A673 (cell line): ENCODE measurements at regions of chr9 and their contacts with region 1.

Region 1: DNA sequence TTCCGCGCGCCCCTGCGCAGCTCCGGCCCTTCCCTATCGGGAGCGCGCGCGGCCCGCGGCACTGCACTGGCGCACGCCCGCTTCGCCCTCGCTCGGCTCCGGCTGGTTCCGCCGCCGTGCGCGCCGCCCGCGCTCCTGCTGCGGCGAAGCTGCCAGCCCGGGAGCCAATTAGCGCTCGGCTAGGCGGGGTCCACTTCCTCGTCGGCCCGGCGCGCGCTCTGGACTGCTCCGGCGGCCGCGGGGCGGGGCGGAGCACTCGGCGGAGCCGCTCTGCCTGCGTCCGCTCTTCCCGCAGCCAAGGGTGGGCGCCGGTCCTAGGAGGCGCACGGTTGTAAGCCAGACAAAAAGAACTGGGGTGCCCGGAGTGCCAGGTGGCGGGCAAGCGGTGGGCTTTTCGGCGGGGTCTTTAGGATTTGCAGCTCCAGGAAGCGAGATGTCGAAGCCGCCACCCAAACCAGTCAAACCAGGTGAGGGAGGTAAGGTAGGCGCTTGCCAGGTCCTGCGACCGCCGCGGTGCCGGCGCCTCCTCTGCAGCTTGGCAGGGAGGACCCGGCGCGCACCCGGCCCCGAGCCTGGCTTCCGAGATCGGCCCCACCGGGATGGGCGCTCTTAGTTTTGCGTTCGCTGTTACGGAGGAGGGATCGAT is at the start of gene OSTF1:
- DNase-seq: peak; percentile 96
- H3K4me3 ChIP-seq: peak within 1 kb of the TSS; percentile 81
- H3K27ac ChIP-seq: peak within 1 kb of the TSS; percentile 61
- H3K4me1 ChIP-seq: peaks cover 7% of the 10 kb centered on the region
- H3K27me3 ChIP-seq: peaks cover 24% of the 10 kb centered on the region
- CTCF ChIP-seq: no peak
- total RNA-seq, gene OSTF1: 1.2 and 2.3 TPM in 2 replicates

Region 2: DNA sequence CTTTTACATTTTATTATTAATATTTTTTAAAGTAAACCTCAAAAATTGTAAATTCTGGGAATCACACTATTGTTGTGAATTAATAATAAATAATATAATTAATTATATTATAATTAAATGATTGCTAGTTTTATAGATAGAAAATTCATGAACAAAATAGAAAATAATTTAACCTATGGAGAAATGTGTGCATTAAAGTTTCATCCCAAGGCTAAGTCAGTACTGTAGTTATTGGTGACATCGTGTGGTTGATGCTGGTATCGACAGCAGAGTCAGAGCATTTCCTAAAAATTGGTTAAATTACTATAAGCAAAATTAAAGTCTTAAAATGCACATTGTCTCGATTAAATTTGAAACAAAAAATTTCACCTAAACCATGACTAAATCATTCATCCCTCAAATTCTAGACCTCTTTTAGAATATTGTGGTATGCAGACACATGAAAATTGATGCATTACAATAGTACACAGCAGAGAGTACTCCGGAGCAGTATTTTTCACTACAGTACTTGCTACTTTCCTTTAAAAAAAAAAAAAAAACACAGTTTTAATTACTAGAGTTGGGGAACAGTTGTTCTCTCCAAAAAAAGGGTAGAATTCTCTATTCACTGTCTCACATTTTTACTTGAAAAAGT is 517.4 kb before region 1 on chr9:
- CTCF ChIA-PET with region 1: no interaction called
- POLR2A ChIA-PET with region 1: no interaction called
- intact Hi-C with region 1: loop called (anchors 10 kb)
- DNase-seq: peak; percentile 39
- H3K4me3 ChIP-seq: no peak overlapping the region
- H3K27ac ChIP-seq: no peak overlapping the region
- H3K4me1 ChIP-seq: no peaks in the 10 kb centered on the region
- H3K27me3 ChIP-seq: peaks cover 10% of the 10 kb centered on the region
- CTCF ChIP-seq: peak; percentile 73

Region 3: DNA sequence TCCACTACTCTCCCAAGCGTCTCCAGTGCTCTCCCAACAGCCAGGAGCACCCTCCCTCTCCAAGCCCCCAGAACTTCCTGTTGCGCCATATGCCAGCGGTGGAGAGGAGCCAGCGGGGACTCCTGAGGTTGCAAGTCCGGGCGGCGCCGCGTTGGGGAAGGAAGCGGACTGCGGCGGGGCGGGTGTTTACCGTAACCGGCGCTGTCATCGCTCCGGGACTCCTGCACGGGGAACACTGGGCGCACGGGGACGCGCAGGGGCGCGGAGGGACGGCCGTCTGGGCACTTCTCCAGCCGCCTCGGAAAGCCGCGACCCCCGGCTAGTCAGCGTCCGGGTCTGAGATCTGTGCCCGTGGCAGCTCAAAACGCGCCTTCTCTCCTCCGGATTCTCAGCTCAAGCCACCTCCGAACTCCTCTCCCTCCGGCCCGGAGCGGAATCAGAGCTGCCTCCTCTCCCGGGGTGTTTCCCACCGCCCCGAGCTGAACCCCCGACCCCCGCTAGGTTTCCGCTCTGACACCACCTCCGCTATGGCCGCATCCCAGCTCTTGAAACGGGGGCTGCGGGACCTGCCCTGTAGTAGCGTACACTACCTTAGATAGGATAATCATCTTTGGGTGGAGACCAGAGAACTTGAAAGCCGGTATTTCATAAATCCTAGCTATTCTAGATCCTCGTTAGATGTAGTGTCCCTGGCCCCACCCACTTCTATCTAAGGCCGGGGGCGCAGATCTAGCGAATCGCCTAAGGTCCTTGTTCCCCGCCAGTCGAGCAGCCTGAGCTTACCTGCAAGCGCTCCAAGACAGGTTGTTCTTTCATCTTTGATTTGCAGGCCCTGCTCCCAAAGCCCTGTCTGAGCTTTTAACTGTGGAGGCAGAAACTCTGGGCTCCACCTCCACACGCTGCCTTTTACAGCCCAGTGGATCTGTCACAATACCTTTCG is 201.1 kb before region 1 on chr9 and contains the start of gene TRPM6:
- CTCF ChIA-PET with region 1: no interaction called
- POLR2A ChIA-PET with region 1: no interaction called
- intact Hi-C with region 1: loop called (anchors 10 kb)
- DNase-seq: peak; percentile 77
- H3K4me3 ChIP-seq: peak within 1 kb of the TSS; percentile 47
- H3K27ac ChIP-seq: no peak within 1 kb of the TSS
- H3K4me1 ChIP-seq: peaks cover 5% of the 10 kb centered on the region
- H3K27me3 ChIP-seq: peaks cover 7% of the 10 kb centered on the region
- CTCF ChIP-seq: no peak
- total RNA-seq, gene TRPM6: 0.06 TPM in 1 of 2 replicates, not detected in the other

Region 4: GRCh38 chr9:74940600-74940999 is 147.8 kb before region 1 on chr9:
- CTCF ChIA-PET with region 1: no interaction called
- POLR2A ChIA-PET with region 1: no interaction called
- intact Hi-C with region 1: loop called (anchors 10 kb)
- DNase-seq: peak; percentile 49
- H3K4me3 ChIP-seq: no peak overlapping the region
- H3K27ac ChIP-seq: no peak overlapping the region
- H3K4me1 ChIP-seq: no peaks in the 10 kb centered on the region
- H3K27me3 ChIP-seq: no peaks in the 10 kb centered on the region
- CTCF ChIP-seq: peak; percentile 29; the same call in 1 of the 2 replicates

Region 5: DNA sequence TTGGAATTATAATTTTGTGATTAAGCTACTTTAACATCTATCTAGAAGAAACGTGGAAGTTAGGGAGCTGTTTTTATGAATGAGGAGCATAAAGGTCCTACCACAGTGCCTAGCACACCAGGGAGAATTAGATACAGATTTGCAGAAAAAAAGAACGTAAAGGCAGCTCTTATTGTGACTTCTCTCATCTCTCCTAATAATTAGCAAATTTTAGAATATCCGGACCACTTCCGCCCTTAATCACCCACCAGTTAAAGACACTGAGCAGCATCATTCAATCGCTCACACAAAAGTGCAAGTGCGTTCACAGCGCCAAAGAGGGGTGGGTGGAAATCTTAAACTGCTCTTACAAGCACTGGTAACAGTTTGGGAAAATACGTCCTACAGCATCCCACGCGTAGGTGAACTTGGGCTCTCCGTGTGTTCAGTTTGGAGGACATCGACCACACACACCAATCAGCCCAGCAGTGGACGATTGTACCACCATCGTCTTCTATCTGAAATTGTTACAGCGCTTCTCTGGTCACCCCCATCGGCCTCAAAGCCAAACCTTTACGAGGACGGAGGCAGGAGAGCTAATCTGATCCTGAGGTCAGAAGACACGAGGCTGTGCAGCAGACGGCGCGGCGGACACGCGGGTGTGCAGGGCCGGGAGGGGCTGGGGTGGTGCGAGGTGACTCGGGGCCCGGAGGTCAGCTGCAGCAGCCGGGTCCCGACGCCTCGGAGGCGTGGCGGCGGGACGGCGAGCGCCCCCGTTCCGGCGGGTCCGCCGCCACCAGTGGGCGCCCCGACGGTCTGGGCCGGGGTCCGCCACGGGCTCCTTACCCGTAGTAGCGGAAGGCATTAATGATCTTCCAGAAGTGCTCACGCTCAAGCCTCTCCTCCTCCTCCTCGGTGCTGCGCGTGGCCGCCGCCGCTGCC is 60.9 kb before region 1 on chr9:
- CTCF ChIA-PET with region 1: no interaction called
- POLR2A ChIA-PET with region 1: interaction called, 3 read pairs
- intact Hi-C with region 1: loop called (anchors 2 kb)
- DNase-seq: peak; percentile 54
- H3K4me3 ChIP-seq: peak overlapping the region; percentile 78
- H3K27ac ChIP-seq: peak overlapping the region; percentile 85
- H3K4me1 ChIP-seq: no peaks in the 10 kb centered on the region
- H3K27me3 ChIP-seq: peaks cover 3% of the 10 kb centered on the region
- CTCF ChIP-seq: 0 out of 2 replicates have a peak, but pooled peaks have one; percentile 2

Region 6: DNA sequence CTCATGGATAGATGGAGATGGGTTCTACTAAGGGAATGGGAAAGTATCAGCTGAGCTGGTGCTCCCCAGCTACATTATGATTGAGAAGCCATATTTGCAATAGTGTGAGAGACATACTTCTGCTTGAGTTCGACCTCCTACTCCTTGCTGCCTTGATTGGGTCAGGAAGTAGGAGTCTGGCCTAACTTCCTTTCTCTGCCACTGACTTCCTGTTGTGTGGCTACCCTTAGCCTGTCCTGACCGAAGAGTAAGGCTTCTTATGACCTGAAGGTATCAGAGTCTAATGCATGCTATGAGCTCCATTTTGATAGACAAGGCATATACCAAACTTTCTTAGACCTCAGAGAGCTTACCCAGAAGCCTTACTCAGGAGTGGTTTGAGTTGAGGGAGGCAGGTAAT is 53.8 kb after region 1 on chr9:
- CTCF ChIA-PET with region 1: no interaction called
- POLR2A ChIA-PET with region 1: no interaction called
- intact Hi-C with region 1: no loop called
- DNase-seq: no peak
- H3K4me3 ChIP-seq: no peak overlapping the region
- H3K27ac ChIP-seq: no peak overlapping the region
- H3K4me1 ChIP-seq: no peaks in the 10 kb centered on the region
- H3K27me3 ChIP-seq: no peaks in the 10 kb centered on the region
- CTCF ChIP-seq: no peak

Region 7: GRCh38 chr9:75242426-75242825 is 154.0 kb after region 1 on chr9:
- CTCF ChIA-PET with region 1: no interaction called
- POLR2A ChIA-PET with region 1: no interaction called
- intact Hi-C with region 1: no loop called
- DNase-seq: no peak
- H3K4me3 ChIP-seq: no peak overlapping the region
- H3K27ac ChIP-seq: no peak overlapping the region
- H3K4me1 ChIP-seq: no peaks in the 10 kb centered on the region
- H3K27me3 ChIP-seq: peaks cover 7% of the 10 kb centered on the region
- CTCF ChIP-seq: no peak